ENCODE measurements at regions of chr9 and their contacts with region 1.

Region 1: GRCh38 chr9:95510709-95511615 is 5.8 kb downstream of the PTCH1 start:
- DNase-seq: peak; percentile 92
- ATAC-seq: peak; percentile 74
- H3K4me3 Mint-ChIP-seq: peak overlapping the region; percentile 82
- H3K27ac Mint-ChIP-seq: peak overlapping the region; percentile 84
- H3K4me1 Mint-ChIP-seq: peaks cover 38% of the 10 kb centered on the region
- H3K27me3 Mint-ChIP-seq: peaks cover 26% of the 10 kb centered on the region

Region 2: GRCh38 chr9:95317119-95317892 is 193.7 kb before region 1 on chr9 and contains the start of gene FANCC:
- CTCF ChIA-PET with region 1: interaction called, 3 read pairs
- POLR2A ChIA-PET with region 1: no interaction called
- intact Hi-C with region 1: loop called (anchors 1 to 2 kb)
- DNase-seq: peak; percentile 90
- ATAC-seq: peak; percentile 84
- H3K4me3 Mint-ChIP-seq: peak within 1 kb of the TSS; percentile 85
- H3K27ac Mint-ChIP-seq: peak within 1 kb of the TSS; percentile 95
- H3K4me1 Mint-ChIP-seq: peaks cover 15% of the 10 kb centered on the region
- H3K27me3 Mint-ChIP-seq: peaks cover 7% of the 10 kb centered on the region
- total RNA-seq, gene FANCC: 15.9 to 16.7 TPM

Region 3: DNA sequence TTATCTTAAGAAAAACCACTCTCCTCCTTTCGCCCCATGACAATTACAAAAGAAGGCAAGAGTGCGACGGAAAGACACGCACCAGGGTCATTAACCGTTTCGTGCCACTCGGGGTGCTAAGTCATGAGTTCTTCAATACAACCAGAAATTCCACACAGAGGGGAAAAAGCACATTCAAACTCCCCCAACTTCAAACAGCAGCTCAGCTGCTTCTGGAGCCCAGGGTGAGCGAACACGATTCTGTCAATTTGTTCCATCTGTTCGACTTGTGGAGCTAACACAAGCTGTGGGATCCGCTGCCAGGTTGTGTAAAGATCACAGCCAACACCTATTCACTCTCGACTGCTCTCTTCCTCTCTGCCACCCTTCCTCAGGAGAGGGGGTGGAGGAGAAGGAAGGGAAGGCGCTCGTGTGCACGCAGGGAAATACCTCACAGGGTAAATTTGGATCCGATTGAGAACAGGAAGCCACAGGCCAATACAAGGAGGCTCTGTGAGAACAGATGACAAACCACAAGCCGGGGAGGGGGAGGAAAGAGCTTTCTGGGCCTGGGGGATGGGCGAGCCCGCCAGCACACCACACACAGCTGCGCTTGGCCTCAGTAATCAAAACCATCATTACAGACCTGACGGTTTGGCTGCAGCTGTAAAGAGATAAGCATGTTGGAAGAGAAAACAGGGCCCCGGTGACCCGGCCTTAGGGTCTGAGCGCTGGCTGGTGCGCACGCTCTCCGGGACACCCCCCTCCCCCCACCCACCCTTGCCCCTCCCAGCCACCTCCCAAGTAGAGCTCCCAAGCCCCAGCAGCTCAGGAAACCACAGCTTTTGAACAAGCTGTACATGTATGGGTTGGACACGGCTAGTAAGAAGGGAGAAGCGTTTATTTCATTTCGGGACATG is 48.5 kb before region 1 on chr9:
- CTCF ChIA-PET with region 1: interaction called, 3 read pairs
- POLR2A ChIA-PET with region 1: no interaction called
- intact Hi-C with region 1: loop called (anchors 1 to 2 kb)
- DNase-seq: peak; percentile 89
- ATAC-seq: peak; percentile 94
- H3K4me3 Mint-ChIP-seq: peak overlapping the region; percentile 72
- H3K27ac Mint-ChIP-seq: peak overlapping the region; percentile 72
- H3K4me1 Mint-ChIP-seq: peaks cover 26% of the 10 kb centered on the region
- H3K27me3 Mint-ChIP-seq: peaks cover 4% of the 10 kb centered on the region

Region 4: GRCh38 chr9:95726756-95727155 is 215.8 kb after region 1 on chr9:
- CTCF ChIA-PET with region 1: no interaction called
- POLR2A ChIA-PET with region 1: no interaction called
- intact Hi-C with region 1: loop called (anchors 1 to 2 kb)
- DNase-seq: no peak
- ATAC-seq: no peak
- H3K4me3 Mint-ChIP-seq: no peak overlapping the region
- H3K27ac Mint-ChIP-seq: no peak overlapping the region
- H3K4me1 Mint-ChIP-seq: peaks cover 37% of the 10 kb centered on the region
- H3K27me3 Mint-ChIP-seq: peaks cover 7% of the 10 kb centered on the region

Region 5: DNA sequence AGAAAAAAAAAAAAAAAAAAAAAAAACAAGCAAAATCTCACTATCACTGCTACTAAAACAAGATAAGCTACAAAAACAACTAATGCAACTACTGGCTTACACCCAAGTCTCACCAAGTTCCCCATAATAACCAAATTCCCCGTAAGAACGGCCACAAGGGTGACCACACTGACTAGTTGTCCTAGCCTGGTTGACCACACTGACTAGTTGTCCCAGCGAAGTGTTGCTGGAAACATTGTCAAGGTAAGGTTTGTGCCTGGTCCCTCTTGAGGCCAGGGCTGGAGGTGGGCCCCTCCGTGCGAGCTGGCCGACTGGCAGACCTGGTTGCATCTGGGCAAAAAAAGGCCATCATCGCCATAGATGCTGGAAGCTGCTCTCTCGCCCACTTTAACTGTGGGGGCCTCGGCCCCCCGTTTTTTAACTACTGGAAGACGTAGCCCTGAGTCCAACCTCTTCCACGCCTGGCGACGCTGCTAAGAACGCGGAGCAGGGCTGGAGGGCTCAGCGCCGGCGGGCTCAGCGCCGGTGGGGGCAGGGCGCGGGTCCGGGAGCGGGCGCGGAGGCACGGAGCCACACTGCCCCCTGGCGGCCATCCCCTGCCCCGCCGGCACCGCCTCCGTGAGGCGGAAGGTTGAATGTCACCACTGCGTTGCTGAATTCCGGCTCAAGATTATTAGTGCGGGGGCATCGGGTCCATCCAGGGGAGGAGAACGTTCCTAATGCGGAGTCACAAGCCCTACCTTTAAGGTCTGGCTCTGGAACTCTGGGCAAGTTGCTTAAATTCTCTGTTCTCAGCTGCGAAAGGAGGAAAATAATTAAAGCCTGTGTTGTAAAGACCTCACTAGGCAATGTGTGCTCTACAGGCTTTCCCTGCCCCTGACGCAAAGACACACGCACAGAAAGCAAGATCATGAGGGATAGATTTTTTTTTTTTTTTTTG is 707.1 kb after region 1 on chr9:
- CTCF ChIA-PET with region 1: no interaction called
- POLR2A ChIA-PET with region 1: no interaction called
- intact Hi-C with region 1: loop called in 1 of 2 experiments (anchors 2 kb)
- DNase-seq: peak; percentile 86
- ATAC-seq: peak; percentile 90
- H3K4me3 Mint-ChIP-seq: peak overlapping the region; percentile 57
- H3K27ac Mint-ChIP-seq: peak overlapping the region; percentile 42
- H3K4me1 Mint-ChIP-seq: peaks cover 9% of the 10 kb centered on the region
- H3K27me3 Mint-ChIP-seq: peaks cover 50% of the 10 kb centered on the region

Region 6: GRCh38 chr9:96566498-96567207 is 1055.7 kb after region 1 on chr9:
- CTCF ChIA-PET with region 1: no interaction called
- POLR2A ChIA-PET with region 1: no interaction called
- intact Hi-C with region 1: loop called in 1 of 2 experiments (anchors 10 kb)
- DNase-seq: peak; percentile 85
- ATAC-seq: peak; percentile 78
- H3K4me3 Mint-ChIP-seq: peak overlapping the region; percentile 66
- H3K27ac Mint-ChIP-seq: peak overlapping the region; percentile 82
- H3K4me1 Mint-ChIP-seq: peaks cover 27% of the 10 kb centered on the region
- H3K27me3 Mint-ChIP-seq: peaks cover 2% of the 10 kb centered on the region

Measured in activated CD4-positive, alpha-beta T cell treated with anti-CD3 and anti-CD28 coated beads for 36 hours (primary cell).